Sigmoid colon (tissue), 7 donors: ENCODE measurements at regions of chr3 and their contacts with region 1.

Region 1: DNA sequence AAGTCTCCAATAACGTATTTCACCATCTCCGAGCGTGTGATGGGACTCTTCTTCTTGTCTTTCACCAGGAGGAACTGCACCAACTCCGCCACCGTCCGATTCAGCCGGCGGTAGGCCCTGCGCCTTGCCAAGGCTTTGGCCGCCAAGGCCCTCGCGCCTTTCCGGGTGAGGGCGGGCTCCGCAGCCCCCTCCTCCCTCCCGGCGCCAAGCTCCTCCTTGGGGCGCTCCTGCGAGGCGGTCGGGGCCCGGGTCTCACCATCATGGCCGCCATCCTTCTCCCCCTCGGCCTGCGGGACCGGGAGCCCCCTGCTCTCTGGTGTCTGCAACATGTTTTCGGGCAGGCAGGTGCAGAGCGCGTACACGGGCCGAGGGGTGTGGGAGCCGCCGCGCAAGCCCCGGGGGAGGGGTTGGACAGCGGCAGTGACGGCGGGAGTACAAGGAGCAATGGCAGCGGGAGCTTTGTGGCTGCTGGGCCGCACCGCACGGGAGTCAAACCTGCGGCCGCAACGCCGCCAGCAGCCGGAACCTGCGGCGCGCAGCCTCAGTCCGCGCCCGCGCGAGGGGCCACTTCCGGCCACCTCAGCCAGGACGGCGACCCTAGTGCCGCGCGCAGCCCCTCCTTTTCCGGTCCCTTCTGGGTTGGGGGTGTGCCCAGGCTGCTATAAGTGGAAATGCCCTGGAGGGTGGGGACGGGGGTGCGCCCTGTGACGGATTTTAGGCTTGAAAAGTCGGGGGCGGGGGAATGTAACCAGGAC is at the start of gene MAGEF1:
- DNase-seq: peak; percentile 88
- H3K4me3 ChIP-seq: peak within 1 kb of the TSS; percentile 84 to 93 (median 90)
- H3K27ac ChIP-seq: peak within 1 kb of the TSS; percentile 95 to 97 (median 96)
- H3K4me1 ChIP-seq: peaks cover 0 to 39% (median 32%) of the 10 kb centered on the region in 4 donors
- H3K27me3 ChIP-seq: no peaks in the 10 kb centered on the region
- CTCF ChIP-seq: no peak
- EP300 ChIP-seq: no peak
- POLR2A ChIP-seq: peak; percentile 36 to 40
- total RNA-seq, gene MAGEF1: 31.0 to 34.1 (median 33.5) TPM

Region 2: DNA sequence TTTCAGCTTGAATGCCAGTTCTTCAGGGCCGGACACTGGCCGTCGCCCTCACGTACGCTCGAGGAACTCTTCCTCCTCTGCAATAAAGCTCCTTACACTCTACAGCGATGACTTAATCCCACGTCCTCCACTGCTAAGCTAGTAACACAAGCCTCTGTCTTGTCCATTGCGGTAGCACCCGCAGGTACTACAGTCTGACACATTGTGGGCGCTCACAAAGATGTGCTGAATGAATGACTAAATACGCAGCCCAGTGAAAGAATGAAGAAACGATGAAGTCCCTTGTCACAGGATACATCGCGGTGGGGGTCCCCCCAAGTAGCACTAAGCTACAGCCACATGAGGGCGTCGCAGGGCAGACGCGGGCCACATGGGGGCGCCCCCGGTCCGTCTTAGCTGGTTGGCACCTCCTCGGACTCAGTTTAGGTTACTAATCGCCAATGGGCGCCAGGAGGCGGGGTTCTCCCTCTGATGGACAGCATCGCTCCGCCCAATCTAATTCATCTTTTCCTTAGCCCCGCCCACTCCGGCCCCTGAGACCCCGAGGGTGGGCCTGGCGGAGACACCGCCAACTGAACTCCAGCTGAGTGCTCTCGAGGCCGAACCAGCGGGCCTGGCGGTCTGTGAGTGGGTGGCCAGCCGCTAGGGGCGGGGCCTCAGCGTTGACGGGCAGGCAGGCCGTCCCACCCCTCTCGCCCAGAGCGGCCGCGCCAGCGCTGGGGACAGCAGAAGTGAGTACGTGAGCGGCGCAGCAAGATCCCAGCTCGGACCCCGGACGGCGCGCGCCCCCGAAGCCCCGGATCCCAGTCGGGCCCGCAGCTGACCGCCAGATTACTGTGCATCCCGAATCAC is 150.4 kb before region 1 on chr3 and contains the start of gene EPHB3:
- intact Hi-C with region 1: loop called (anchors 2 kb)
- DNase-seq: peak; percentile 100
- H3K4me3 ChIP-seq: peak within 1 kb of the TSS; percentile 64 to 91 (median 72)
- H3K27ac ChIP-seq: peak within 1 kb of the TSS; percentile 80 to 89 (median 81)
- H3K4me1 ChIP-seq: peaks cover 0 to 53% (median 35%) of the 10 kb centered on the region in 4 donors
- H3K27me3 ChIP-seq: no peaks in the 10 kb centered on the region
- CTCF ChIP-seq: peak; percentile 98 to 99 (median 98)
- EP300 ChIP-seq: no peak
- POLR2A ChIP-seq: peak; percentile 74 to 89
- total RNA-seq, gene EPHB3: 1.8 to 2.8 (median 2.2) TPM

Region 3: DNA sequence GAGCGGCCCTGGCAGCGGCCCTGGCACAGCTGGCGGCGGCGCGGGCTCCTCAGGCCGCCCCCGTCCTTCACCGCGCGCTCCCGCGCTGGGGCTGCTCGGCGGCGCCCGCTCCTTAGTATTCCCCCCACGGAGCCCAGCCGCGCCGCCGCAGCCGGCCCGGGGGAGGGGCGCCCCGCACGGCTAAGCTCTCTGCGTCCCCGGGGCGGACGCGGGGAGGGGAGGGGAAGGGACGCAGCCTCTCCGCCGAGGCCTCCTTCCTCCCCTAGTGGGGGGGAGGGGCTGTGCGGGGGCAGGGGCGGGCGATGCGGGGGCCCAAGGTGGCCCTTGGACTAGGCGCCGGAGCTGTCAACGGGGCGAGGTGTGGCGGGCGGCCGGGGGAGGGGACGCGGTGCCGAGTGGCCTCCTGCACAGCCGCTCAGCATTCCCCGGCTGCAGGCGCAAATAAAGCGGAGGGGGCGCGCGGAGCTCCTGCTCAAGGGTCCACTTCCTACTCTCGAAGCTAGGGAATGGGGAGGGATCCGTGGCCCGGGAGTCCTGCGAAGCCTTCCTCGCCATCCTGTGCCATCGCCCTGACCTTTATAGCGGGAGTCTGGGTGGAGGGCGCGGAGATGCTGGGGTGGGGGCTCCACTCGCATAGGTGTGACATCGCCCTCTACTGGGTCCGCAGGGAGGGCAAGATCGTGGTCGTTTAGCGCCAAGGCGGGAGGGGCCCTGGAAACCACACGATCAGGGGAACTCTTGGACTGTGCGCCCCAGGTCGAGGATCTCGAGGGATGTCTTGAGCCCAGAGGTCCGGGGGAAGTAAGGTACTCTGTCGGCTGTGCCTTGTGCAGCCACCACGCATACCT is 127.9 kb before region 1 on chr3:
- intact Hi-C with region 1: loop called (anchors 5 kb)
- DNase-seq: no peak
- H3K4me3 ChIP-seq: peak overlapping the region; percentile 59 to 68 (median 64)
- H3K27ac ChIP-seq: peak overlapping the region; percentile 83 to 88 (median 84)
- H3K4me1 ChIP-seq: peaks cover 0 to 31% (median 19%) of the 10 kb centered on the region in 4 donors
- H3K27me3 ChIP-seq: no peaks in the 10 kb centered on the region
- CTCF ChIP-seq: peak; percentile 18 to 39 (median 30)
- EP300 ChIP-seq: no peak
- POLR2A ChIP-seq: no peak

Region 4: DNA sequence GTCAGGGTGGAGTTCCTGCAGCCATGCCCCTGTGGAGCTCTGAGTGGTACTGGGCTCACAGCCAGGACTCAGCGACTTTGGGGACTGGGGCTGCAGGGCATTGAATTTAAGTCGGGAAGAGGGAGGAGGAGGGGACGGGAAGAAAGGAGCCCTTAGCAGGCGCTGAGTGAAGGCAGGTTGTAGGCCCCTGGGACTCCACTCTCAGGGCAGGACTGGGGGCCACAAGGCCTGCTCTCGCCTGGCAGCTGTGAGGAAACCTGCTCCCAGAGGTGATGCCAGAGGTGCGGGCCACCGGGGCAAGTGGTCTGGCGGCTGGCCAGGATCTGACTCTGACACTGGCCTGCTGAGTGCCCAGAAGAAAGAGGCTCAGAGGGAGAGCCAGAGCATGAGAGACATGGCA is 76.5 kb before region 1 on chr3:
- intact Hi-C with region 1: no loop called
- DNase-seq: no peak
- H3K4me3 ChIP-seq: no peak overlapping the region
- H3K27ac ChIP-seq: no peak overlapping the region
- H3K4me1 ChIP-seq: peaks cover 0 to 11% (median 7%) of the 10 kb centered on the region in 4 donors
- H3K27me3 ChIP-seq: no peaks in the 10 kb centered on the region
- CTCF ChIP-seq: no peak
- EP300 ChIP-seq: no peak
- POLR2A ChIP-seq: no peak

Region 5: DNA sequence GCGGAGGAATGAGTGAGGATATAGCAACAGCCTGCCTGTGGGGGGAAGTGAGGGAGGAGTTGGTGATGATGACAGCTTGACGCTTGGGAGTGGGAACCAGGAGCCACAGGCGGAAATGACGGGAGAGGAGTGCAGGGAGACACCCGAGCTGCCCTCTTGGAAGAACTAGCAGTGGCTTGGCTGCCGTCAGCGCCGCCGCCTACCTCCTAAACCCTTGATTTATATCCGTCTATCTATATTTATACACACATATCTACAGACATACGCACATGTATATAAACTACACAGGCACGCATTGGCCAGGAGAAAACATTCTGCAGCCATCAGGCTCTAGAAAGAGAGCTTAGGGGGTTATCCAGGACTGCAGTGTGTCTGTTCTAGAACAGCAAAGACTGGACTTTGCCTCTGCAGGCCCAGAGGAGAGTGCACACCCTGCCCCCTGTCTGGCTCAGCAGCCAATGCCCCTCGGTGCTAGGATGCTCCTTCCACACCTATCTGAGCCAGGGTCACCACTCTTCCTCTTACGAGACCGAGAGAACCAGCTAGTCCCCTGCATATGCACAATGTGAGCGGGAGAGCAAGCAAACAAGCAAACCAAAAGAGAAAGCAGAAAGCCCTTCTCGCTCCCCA is 45.5 kb after region 1 on chr3:
- intact Hi-C with region 1: loop called (anchors 5 kb)
- DNase-seq: peak; percentile 91
- H3K4me3 ChIP-seq: peak overlapping the region in 3 of 4 donors; percentile 5 to 20 (median 20)
- H3K27ac ChIP-seq: peak overlapping the region; percentile 43 to 78 (median 74)
- H3K4me1 ChIP-seq: peaks cover 0 to 26% (median 20%) of the 10 kb centered on the region in 4 donors
- H3K27me3 ChIP-seq: no peaks in the 10 kb centered on the region
- CTCF ChIP-seq: peak in 1 of 4 experiments; percentile 11
- EP300 ChIP-seq: peak in 2 of 4 donors; percentile 36 to 85
- POLR2A ChIP-seq: no peak